ENCODE measurements at regions of chr4 and their contacts with region 1.

Region 1: GRCh38 chr4:138540056-138540800 is 298.1 kb upstream of the SLC7A11 start:
- DNase-seq: no peak
- ATAC-seq: no peak
- H3K4me3 ChIP-seq: no peak overlapping the region
- H3K27ac ChIP-seq: no peak overlapping the region
- H3K4me1 ChIP-seq: no peaks in the 10 kb centered on the region
- H3K27me3 ChIP-seq: no peaks in the 10 kb centered on the region
- CTCF ChIP-seq: no peak
- EP300 ChIP-seq: no peak
- POLR2A ChIP-seq: no peak
- RAD21 ChIP-seq: no peak

Region 2: DNA sequence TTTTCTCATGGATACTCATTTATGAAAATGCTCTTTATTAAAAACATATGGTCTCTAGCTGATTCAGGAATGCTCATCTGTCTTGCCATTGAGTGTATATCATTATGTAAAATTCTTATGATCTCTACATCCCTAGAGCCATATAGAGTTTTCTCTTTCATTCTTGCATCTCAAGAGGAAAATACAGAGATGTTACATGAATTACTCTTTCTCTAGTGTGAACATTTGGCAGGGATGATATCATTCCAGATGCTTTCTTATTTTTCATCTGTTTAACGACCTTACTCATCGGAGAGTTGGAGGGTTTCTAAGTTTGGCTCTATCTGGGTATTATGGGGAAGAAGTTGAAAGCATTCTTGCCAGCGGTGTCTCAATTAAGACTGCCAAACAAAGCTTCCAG is 95.1 kb before region 1 on chr4:
- CTCF ChIA-PET with region 1: no interaction called
- POLR2A ChIA-PET with region 1: no interaction called
- RAD21 ChIA-PET with region 1: no interaction called
- SMC1A ChIA-PET with region 1: no interaction called
- in situ Hi-C with region 1: no loop called
- intact Hi-C with region 1: no loop called
- DNase-seq: no peak
- ATAC-seq: no peak
- H3K4me3 ChIP-seq: no peak overlapping the region
- H3K27ac ChIP-seq: no peak overlapping the region
- H3K4me1 ChIP-seq: no peaks in the 10 kb centered on the region
- H3K27me3 ChIP-seq: no peaks in the 10 kb centered on the region
- CTCF ChIP-seq: no peak
- EP300 ChIP-seq: no peak
- POLR2A ChIP-seq: no peak
- RAD21 ChIP-seq: no peak

Region 3: DNA sequence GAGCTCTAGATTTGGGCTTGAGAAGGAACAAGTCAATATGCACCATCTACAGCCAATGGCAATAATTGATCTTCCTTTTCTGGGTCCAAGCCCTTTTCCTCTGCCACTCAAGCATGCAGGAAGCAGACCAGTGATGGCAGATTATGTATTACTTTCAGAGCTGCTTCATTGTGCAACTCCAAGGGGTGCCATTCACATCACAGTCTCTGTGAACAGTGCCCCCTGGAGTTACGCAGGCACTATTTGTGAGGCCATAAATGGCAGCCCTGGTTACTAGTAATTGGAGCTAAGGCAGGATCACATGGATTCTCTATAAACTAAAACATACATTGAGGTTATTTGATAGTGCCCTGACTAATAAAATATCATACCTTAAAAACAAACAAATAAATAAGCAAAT is 15.4 kb after region 1 on chr4:
- CTCF ChIA-PET with region 1: interaction called, 10 read pairs
- POLR2A ChIA-PET with region 1: no interaction called
- RAD21 ChIA-PET with region 1: no interaction called
- SMC1A ChIA-PET with region 1: no interaction called
- in situ Hi-C with region 1: no loop called
- intact Hi-C with region 1: no loop called
- DNase-seq: no peak
- ATAC-seq: peak; percentile 87
- H3K4me3 ChIP-seq: no peak overlapping the region
- H3K27ac ChIP-seq: no peak overlapping the region
- H3K4me1 ChIP-seq: no peaks in the 10 kb centered on the region
- H3K27me3 ChIP-seq: no peaks in the 10 kb centered on the region
- CTCF ChIP-seq: peak; percentile 31 to 46 (median 41); a peak in 5 of 6 replicates
- EP300 ChIP-seq: no peak
- POLR2A ChIP-seq: no peak
- RAD21 ChIP-seq: peak; percentile 33; the same call in 1 of the 2 replicates

Region 4: DNA sequence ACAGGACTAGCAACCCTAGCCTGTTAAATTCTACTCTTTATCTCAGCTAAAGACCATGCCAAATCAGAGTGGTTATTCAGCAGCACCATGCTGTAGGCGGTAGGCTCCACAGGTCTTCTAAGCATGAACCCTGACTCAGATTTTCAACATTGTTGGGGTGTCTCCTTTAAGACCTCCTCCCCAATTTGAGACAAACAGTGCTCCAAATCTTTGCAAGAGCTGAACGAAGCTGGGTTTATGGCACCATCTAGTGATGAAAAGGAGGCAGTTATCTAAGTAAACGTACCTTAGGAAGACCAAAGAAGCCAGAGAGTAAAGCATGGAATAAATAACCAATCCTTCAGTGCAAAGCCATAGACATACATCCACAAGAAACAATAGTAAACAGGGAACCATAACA is 36.5 kb after region 1 on chr4:
- CTCF ChIA-PET with region 1: no interaction called
- POLR2A ChIA-PET with region 1: no interaction called
- RAD21 ChIA-PET with region 1: no interaction called
- SMC1A ChIA-PET with region 1: no interaction called
- in situ Hi-C with region 1: no loop called
- intact Hi-C with region 1: no loop called
- DNase-seq: no peak
- ATAC-seq: peak; percentile 71
- H3K4me3 ChIP-seq: no peak overlapping the region
- H3K27ac ChIP-seq: no peak overlapping the region
- H3K4me1 ChIP-seq: no peaks in the 10 kb centered on the region
- H3K27me3 ChIP-seq: no peaks in the 10 kb centered on the region
- CTCF ChIP-seq: peak in 2 of 3 experiments; percentile 34 to 41; a peak in 4 of 6 replicates
- EP300 ChIP-seq: no peak
- POLR2A ChIP-seq: no peak
- RAD21 ChIP-seq: peak; percentile 60

Measured in GM12878 (cell line).